Heart right ventricle (tissue), 16 donors: ENCODE measurements at regions of chr19 and their contacts with region 1.

Region 1: GRCh38 chr19:35509861-35510625 is 3.4 kb downstream of the DMKN start:
- DNase-seq: peak; percentile 68 to 79
- ATAC-seq: peak; percentile 80 to 92 (median 87)
- H3K4me3 ChIP-seq: peak overlapping the region in 9 of 10 donors; percentile 27 to 56 (median 44)
- H3K27ac ChIP-seq: no peak overlapping the region
- H3K4me1 ChIP-seq: peaks cover 0 to 17% (median 13%) of the 10 kb centered on the region in 9 donors
- H3K27me3 ChIP-seq: peaks cover 0 to 78% (median 57%) of the 10 kb centered on the region in 7 donors
- CTCF ChIP-seq: peak; percentile 78 to 97 (median 94)

Region 2: DNA sequence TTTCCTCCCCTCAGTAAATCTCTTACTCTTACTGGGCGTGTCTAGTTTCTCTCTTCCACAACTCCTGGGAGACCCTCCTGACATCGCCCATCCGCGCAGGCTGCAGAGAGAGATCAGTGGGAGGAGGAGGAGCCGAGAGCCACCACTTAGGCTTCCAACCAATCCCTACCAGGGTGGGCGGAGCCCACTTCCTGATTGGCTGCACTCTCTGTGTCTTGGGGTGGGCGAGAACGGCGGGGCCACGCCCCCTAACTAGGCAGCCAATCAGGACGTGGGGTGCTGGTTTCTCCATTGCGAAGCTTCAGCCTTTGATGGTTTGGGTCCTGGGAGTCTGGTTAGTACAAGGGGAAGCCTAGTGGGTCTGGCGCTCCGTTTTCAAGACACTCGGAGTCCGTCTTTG is 75.8 kb after region 1 on chr19 and contains the start of gene PMIS2:
- intact Hi-C with region 1: loop called in 1 of 10 experiments (anchors 5 kb)
- DNase-seq: no peak
- ATAC-seq: no peak
- H3K4me3 ChIP-seq: no peak within 1 kb of the TSS
- H3K27ac ChIP-seq: no peak within 1 kb of the TSS
- H3K4me1 ChIP-seq: no peaks in the 10 kb centered on the region
- H3K27me3 ChIP-seq: peaks cover 0 to 39% (median 25%) of the 10 kb centered on the region in 7 donors
- CTCF ChIP-seq: no peak
- total RNA-seq, gene PMIS2: not detected